Endothelial cell of umbilical vein (primary cell): ENCODE measurements at regions of chr1 and their contacts with region 1.

Region 1: GRCh38 chr1:109984456-109985275 is at the start of gene AHCYL1:
- DNase-seq: peak; percentile 98
- H3K4me3 ChIP-seq: peak within 1 kb of the TSS; percentile 87 to 94 (median 91)
- H3K27ac ChIP-seq: peak within 1 kb of the TSS; percentile 95
- H3K4me1 ChIP-seq: peaks cover 31% of the 10 kb centered on the region
- H3K27me3 ChIP-seq: no peaks in the 10 kb centered on the region
- CTCF ChIP-seq: peak; percentile 97 to 98
- POLR2A ChIP-seq: peak; percentile 50
- total RNA-seq, gene AHCYL1: 64.3 and 74.2 TPM in 2 replicates

Region 2: DNA sequence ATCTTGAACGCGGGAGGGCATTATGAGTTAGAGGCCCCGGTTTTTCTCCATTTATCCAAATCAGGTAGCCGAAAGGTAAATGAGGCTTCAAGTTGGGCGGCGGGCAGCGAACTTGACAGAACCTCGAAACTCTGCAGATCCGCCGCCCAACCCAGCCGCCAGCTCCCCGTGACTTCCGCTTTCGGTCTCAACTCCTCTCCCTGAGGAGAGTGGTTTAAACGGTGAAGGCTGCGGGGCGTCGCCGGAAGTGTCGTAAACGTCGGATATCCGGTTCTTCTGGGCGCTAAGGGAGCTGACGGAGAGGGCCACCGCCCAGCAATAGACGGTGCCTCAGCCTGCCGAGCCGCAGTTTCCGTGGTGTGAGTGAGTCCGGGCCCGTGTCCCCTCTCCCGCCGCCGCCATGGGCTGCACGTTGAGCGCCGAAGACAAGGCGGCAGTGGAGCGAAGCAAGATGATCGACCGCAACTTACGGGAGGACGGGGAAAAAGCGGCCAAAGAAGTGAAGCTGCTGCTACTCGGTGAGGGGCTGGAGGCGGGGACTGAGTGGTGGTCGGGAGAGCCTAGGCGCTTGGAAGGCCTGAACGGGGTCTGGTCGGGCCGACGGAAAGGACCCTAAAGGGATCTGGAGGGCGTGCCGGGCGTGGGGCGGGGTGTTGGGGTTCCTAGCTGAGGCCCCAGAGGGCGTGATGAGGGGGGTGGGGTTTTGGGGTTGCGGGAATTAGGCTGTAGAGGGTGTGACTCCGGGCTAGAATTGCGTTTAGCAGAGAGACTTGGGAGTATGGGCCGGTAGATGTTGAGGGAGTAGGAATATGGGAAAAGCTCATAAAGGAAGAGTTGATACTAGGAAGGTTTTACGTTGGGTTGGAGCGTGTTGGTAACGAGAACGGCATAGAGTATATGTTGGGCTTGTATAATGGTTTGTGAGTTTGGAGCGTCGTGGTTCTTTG is 436.1 kb before region 1 on chr1 and contains the start of gene GNAI3:
- CTCF ChIA-PET with region 1: interaction called, 39 read pairs
- POLR2A ChIA-PET with region 1: no interaction called
- dilution Hi-C with region 1: no loop called
- intact Hi-C with region 1: loop called (anchors 2 kb)
- DNase-seq: peak; percentile 96
- H3K4me3 ChIP-seq: peak within 1 kb of the TSS; percentile 75 to 98 (median 96)
- H3K27ac ChIP-seq: peak within 1 kb of the TSS; percentile 87
- H3K4me1 ChIP-seq: peaks cover 29% of the 10 kb centered on the region
- H3K27me3 ChIP-seq: peaks cover 0 to 2% of the 10 kb centered on the region in 2 experiments
- CTCF ChIP-seq: no peak
- POLR2A ChIP-seq: peak; percentile 89
- total RNA-seq, gene GNAI3: 12.9 and 14.0 TPM in 2 replicates

Region 3: DNA sequence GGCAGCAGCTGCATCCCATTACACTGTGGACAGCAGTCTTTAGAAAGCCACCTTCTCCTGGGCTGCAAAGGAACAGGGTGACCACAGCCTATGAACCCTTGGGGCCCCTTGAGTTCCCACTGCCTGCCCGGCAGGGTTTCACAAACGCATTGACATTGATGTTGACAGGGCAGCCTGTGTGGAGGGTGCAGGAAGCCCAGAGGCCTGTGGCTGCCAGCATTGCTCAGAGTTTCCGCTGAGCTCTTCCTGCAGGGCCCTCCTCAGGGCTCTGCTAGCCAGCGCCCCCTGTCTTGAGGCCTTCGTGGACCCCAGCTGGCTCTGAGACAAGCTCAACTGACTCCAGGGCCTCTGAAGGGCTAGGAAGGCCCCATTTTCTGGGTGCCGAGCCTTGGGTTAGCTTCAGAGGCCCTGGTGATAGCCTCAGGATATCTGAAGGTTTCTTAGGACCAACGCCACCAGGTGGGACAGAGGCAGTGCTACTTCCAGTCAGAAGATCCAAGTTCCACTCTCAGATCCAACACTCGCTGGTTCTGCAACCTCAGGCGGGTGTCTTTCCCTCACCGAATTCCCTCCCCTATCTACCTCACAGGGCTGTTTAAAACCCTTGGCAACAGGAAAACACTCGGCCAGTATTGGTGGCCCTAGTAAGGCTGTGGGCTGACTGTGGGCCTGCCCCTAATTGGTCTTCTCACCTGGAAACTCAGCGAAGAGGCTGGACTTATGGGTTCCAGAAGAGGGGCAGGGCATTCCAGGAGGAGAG is 193.8 kb before region 1 on chr1:
- CTCF ChIA-PET with region 1: interaction called, 807 read pairs
- POLR2A ChIA-PET with region 1: interaction called, 3 read pairs
- dilution Hi-C with region 1: no loop called
- intact Hi-C with region 1: loop called (anchors 1 kb)
- DNase-seq: peak; percentile 90
- H3K4me3 ChIP-seq: no peak overlapping the region
- H3K27ac ChIP-seq: peak overlapping the region; percentile 52
- H3K4me1 ChIP-seq: peaks cover 38% of the 10 kb centered on the region
- H3K27me3 ChIP-seq: no peaks in the 10 kb centered on the region
- CTCF ChIP-seq: peak; percentile 83 to 88
- POLR2A ChIP-seq: no peak

Region 4: GRCh38 chr1:109877320-109877771 is 107.3 kb before region 1 on chr1:
- CTCF ChIA-PET with region 1: interaction called, 16 read pairs
- POLR2A ChIA-PET with region 1: no interaction called
- dilution Hi-C with region 1: no loop called
- intact Hi-C with region 1: no loop called
- DNase-seq: peak; percentile 56
- H3K4me3 ChIP-seq: no peak overlapping the region
- H3K27ac ChIP-seq: no peak overlapping the region
- H3K4me1 ChIP-seq: peaks cover 8% of the 10 kb centered on the region
- H3K27me3 ChIP-seq: peaks cover 7 to 15% of the 10 kb centered on the region in 2 experiments
- CTCF ChIP-seq: peak in 1 of 2 donors; percentile 25
- POLR2A ChIP-seq: no peak

Region 5: DNA sequence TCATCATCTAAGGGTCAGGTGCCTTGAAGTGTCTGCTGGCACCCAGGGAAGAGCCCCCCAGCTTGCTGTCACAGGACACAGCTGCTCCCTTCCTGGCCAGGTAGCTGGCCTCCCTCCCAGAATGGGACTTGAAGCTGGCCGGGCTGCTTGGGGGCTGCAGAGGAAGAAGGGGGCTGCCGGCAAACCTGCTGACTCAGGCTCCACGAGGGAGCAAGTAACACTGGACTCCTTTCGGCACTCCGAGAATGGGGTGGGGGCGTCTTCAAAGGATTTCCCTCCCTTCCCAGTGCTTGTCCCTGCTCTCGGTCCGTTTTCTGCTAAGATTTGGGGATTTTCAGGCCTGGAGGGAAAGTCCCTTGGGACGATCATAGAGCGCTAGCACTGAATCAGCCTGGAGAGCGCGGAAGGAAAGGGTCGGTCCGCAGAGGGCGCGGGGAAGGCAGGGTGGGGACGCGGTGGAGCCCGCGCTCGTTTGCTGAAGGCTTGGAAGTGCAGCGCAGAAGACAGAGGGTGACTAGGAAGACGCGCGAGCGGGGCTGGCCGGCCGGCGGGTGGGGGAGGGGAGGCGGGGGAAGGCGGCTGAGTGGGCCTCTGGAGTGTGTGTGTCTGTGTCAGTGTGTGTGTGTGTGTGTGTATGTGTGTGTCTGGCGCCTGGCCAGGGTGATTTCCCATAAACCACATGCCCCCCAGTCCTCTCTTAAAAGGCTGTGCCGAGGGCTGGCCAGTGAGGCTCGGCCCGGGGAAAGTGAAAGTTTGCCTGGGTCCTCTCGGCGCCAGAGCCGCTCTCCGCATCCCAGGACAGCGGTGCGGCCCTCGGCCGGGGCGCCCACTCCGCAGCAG is 74.3 kb before region 1 on chr1 and contains the start of gene CSF1:
- CTCF ChIA-PET with region 1: interaction called, 20 read pairs
- POLR2A ChIA-PET with region 1: interaction called, 5 read pairs
- dilution Hi-C with region 1: no loop called
- intact Hi-C with region 1: loop called (anchors 1 kb)
- DNase-seq: peak; percentile 77
- H3K4me3 ChIP-seq: peak within 1 kb of the TSS; percentile 36 to 91 (median 45)
- H3K27ac ChIP-seq: peak within 1 kb of the TSS; percentile 45
- H3K4me1 ChIP-seq: peaks cover 8% of the 10 kb centered on the region
- H3K27me3 ChIP-seq: peaks cover 0 to 4% of the 10 kb centered on the region in 2 experiments
- CTCF ChIP-seq: no peak
- POLR2A ChIP-seq: no peak
- total RNA-seq, gene CSF1: 22.7 and 28.9 TPM in 2 replicates

Region 6: GRCh38 chr1:109947582-109948286 is 36.9 kb before region 1 on chr1:
- CTCF ChIA-PET with region 1: interaction called, 12 read pairs
- POLR2A ChIA-PET with region 1: no interaction called
- dilution Hi-C with region 1: no loop called
- intact Hi-C with region 1: no loop called
- DNase-seq: peak; percentile 17
- H3K4me3 ChIP-seq: no peak overlapping the region
- H3K27ac ChIP-seq: no peak overlapping the region
- H3K4me1 ChIP-seq: peaks cover 9% of the 10 kb centered on the region
- H3K27me3 ChIP-seq: peaks cover 0 to 2% of the 10 kb centered on the region in 2 experiments
- CTCF ChIP-seq: no peak
- POLR2A ChIP-seq: no peak

Region 7: GRCh38 chr1:110003747-110004630 is 19.3 kb after region 1 on chr1:
- CTCF ChIA-PET with region 1: interaction called, 54 read pairs
- POLR2A ChIA-PET with region 1: interaction called, 4 read pairs
- dilution Hi-C with region 1: no loop called
- intact Hi-C with region 1: loop called (anchors 1 kb)
- DNase-seq: peak; percentile 93
- H3K4me3 ChIP-seq: peak overlapping the region in 1 of 3 experiments; percentile 28
- H3K27ac ChIP-seq: peak overlapping the region; percentile 75
- H3K4me1 ChIP-seq: peaks cover 29% of the 10 kb centered on the region
- H3K27me3 ChIP-seq: no peaks in the 10 kb centered on the region
- CTCF ChIP-seq: no peak
- POLR2A ChIP-seq: no peak

Region 8: GRCh38 chr1:110645821-110646735 is 661.4 kb after region 1 on chr1:
- CTCF ChIA-PET with region 1: no interaction called
- POLR2A ChIA-PET with region 1: no interaction called
- dilution Hi-C with region 1: no loop called
- intact Hi-C with region 1: no loop called
- DNase-seq: no peak
- H3K4me3 ChIP-seq: no peak overlapping the region
- H3K27ac ChIP-seq: no peak overlapping the region
- H3K4me1 ChIP-seq: no peaks in the 10 kb centered on the region
- H3K27me3 ChIP-seq: no peaks in the 10 kb centered on the region
- CTCF ChIP-seq: no peak
- POLR2A ChIP-seq: no peak